ENCODE measurements at regions of chr21 and their contacts with region 1.

Region 1: DNA sequence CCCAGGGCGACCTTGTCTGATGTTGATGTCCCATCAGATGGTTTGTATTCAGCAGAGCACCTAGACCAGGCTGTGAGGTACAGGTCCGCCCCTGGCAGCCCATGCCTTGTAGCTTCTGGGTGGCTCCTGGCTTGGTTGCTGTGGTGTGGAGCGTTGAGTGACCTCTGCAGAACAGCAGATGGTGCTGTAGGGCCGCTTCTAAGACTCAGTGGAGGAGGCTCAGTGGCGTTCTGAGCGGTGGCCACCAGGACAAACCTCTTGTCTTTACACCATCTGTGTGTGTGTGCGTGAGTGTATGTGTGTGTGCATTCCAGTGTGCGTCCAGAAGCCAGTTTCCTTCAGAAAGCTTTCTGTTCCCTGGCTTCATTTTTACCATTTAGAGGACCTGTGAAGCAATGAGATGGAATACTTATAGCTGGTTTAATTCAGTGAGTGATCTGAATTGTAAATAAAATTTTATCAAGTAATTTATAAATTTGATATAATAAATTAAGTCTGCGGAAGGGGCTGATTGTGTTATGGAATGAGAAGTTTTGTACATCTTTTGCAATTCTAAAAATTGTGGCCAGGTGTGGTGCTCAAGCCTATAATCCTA is 66.1 kb downstream of the ADARB1 start:
- DNase-seq: peak; percentile 86
- CTCF ChIP-seq: peak; percentile 87

Region 2: GRCh38 chr21:44962403-44962966 is 178.0 kb before region 1 on chr21:
- CTCF ChIA-PET with region 1: interaction called, 61 read pairs
- POLR2A ChIA-PET with region 1: no interaction called
- DNase-seq: no peak
- CTCF ChIP-seq: no peak

Region 3: GRCh38 chr21:45098867-45099266 is 41.6 kb before region 1 on chr21:
- CTCF ChIA-PET with region 1: interaction called, 120 read pairs
- POLR2A ChIA-PET with region 1: no interaction called
- DNase-seq: peak; percentile 56
- CTCF ChIP-seq: peak; percentile 60

Region 4: GRCh38 chr21:45152265-45152746 is 11.9 kb after region 1 on chr21:
- CTCF ChIA-PET with region 1: interaction called, 46 read pairs
- POLR2A ChIA-PET with region 1: no interaction called
- DNase-seq: peak; percentile 74
- CTCF ChIP-seq: peak; percentile 93

Region 5: GRCh38 chr21:45209046-45209445 is 68.6 kb after region 1 on chr21:
- CTCF ChIA-PET with region 1: interaction called, 10 read pairs
- POLR2A ChIA-PET with region 1: no interaction called
- DNase-seq: no peak
- CTCF ChIP-seq: no peak

Region 6: GRCh38 chr21:45820171-45821091 is 680.0 kb after region 1 on chr21:
- CTCF ChIA-PET with region 1: interaction called, 71 read pairs
- POLR2A ChIA-PET with region 1: no interaction called
- DNase-seq: peak; percentile 89
- CTCF ChIP-seq: peak; percentile 85

Measured in GM10248 (cell line).